ENCODE measurements at regions of chr14 and their contacts with region 1.

Region 1: GRCh38 chr14:99401621-99402284 is 78.9 kb downstream of the SETD3 start:
- DNase-seq: no peak
- H3K4me3 ChIP-seq: no peak overlapping the region
- H3K27ac ChIP-seq: no peak overlapping the region
- H3K4me1 ChIP-seq: no peaks in the 10 kb centered on the region
- H3K27me3 ChIP-seq: no peaks in the 10 kb centered on the region
- CTCF ChIP-seq: no peak
- POLR2A ChIP-seq: no peak

Region 2: DNA sequence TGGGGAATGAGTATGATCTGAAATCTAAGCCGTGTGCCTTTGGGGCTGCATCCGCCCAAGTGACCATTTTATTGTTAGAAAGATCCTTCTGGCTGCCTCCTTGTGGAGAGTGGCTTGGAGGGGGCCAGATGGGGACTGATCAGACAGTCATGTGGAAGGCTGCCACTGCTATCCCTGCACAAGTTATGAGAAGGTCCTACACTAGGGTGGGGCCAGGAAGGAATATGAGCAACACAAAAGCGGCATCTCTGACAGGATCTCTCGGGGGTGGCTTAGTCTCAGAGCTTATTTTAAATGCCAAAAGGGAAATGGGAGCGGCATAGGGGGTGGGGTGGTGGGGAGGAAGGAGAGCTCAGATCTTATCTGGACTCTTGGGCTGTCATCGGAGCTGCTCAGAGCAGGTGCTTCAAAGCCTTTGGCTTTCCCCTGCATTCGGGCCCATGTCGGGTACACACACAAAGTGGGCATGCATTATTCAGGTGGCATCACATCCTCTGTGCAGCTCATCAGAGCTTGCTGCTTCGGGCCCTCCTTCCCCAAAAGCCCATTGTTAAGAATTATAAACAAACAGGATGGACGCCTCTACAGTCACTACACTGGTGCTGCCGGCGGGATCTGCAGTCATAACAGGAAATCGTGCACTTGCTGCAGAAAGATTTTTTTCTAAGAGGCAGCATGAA is 1799.2 kb before region 1 on chr14:
- intact Hi-C with region 1: loop called (anchors 10 kb)
- DNase-seq: no peak
- H3K4me3 ChIP-seq: no peak overlapping the region
- H3K27ac ChIP-seq: no peak overlapping the region
- H3K4me1 ChIP-seq: no peaks in the 10 kb centered on the region
- H3K27me3 ChIP-seq: peaks cover 0 to 9% of the 10 kb centered on the region in 2 donors
- CTCF ChIP-seq: no peak
- POLR2A ChIP-seq: no peak